Dorsolateral prefrontal cortex (tissue), 120 donors: ENCODE measurements at regions of chr3 and their contacts with region 1.

Region 1: GRCh38 chr3:47522082-47522987 is 8.8 kb upstream of the ELP6 start:
- DNase-seq: peak; percentile 68 to 92 (median 82)
- H3K4me3 ChIP-seq: peak overlapping the region in 5 of 59 donors; percentile 11 to 34 (median 14)
- H3K27ac ChIP-seq: peak overlapping the region in 5 of 59 donors; percentile 8 to 47 (median 27)
- H3K27me3 ChIP-seq: no peaks in the 10 kb centered on the region
- CTCF ChIP-seq: peak; percentile 77 to 98 (median 94)

Region 2: DNA sequence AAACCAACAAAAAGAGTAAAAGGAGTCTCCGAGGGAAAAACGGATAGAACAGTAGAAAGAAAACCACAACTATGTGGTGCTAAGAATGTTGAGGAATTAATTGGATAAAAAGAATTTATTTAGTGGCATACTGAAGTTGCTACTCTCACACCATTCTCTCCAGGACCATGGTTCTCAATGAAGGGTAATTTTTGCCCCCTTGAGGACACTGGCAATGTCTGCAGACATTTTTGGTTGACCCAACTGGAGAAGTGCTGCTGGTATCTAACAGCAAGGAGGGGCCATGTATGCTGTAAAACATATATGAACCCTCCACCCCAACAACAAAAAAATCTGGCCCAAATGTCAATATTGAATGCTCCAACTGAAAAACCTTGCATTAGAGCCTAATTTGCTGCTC is 142.2 kb after region 1 on chr3:
- intact Hi-C with region 1: loop called in 1 of 2 experiments (anchors 10 kb)
- DNase-seq: no peak
- H3K4me3 ChIP-seq: no peak overlapping the region
- H3K27ac ChIP-seq: no peak overlapping the region
- H3K27me3 ChIP-seq: no peaks in the 10 kb centered on the region
- CTCF ChIP-seq: peak in 45 of 56 donors; percentile 17 to 57 (median 33)

Region 3: GRCh38 chr3:47791193-47791855 is 269.0 kb after region 1 on chr3:
- intact Hi-C with region 1: loop called (anchors 1 kb)
- DNase-seq: no peak
- H3K4me3 ChIP-seq: no peak overlapping the region
- H3K27ac ChIP-seq: no peak overlapping the region
- H3K27me3 ChIP-seq: no peaks in the 10 kb centered on the region
- CTCF ChIP-seq: no peak

Region 4: DNA sequence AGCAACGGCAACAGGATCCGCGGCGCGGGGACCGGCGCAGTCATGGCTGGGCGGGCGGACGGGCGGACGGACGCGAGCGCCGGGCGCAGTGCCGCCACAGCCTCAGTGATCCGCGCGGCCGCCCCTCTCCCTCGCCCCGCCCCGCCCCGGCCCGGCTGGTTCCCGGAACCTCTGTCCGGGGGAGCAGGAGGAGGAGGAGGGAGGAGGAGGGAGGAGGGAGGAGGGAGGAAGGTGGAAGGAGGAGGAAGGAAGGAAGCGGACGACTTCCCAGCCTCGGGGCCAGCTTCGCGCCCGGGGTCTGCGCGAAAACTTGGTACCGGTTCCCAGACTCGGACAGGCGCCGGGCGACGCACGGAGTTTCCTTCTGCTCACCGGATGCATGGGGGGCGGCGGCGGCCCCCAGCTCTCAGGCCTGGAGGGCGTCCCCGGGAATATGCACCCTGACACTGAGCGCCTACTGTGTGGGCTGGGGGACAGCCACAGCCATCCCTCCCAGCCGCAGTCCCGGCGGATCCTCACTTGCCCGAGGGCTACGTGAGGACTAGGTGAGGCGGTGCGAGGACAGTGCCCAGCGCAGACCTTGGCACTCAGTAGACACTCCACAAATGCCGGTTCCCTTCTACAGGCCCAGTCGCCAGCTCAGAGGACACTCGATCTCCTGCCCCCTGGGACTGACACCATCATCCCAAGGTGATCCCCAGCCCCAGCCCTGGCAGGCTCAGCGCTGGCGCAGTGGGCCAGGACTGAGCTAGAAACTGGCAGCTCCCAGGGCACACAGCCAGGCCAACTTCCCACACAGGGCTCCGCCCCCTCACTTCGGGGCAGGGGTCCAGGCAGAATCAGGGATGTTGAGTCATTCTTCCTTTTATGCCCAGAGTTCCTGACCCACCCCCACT is 982.0 kb after region 1 on chr3 and contains the start of gene SHISA5:
- intact Hi-C with region 1: no loop called
- DNase-seq: peak in 9 of 10 donors; percentile 35 to 82 (median 64)
- H3K4me3 ChIP-seq: peak within 1 kb of the TSS; percentile 55 to 88 (median 76)
- H3K27ac ChIP-seq: peak within 1 kb of the TSS; percentile 26 to 95 (median 89)
- H3K27me3 ChIP-seq: no peaks in the 10 kb centered on the region
- CTCF ChIP-seq: peak in 2 of 56 donors; percentile 12 to 24
- total RNA-seq, gene SHISA5: 71.6 to 162 (median 99.2) TPM